Left colon (tissue), 2 donors: ENCODE measurements at regions of chr3 and their contacts with region 1.

Region 1: DNA sequence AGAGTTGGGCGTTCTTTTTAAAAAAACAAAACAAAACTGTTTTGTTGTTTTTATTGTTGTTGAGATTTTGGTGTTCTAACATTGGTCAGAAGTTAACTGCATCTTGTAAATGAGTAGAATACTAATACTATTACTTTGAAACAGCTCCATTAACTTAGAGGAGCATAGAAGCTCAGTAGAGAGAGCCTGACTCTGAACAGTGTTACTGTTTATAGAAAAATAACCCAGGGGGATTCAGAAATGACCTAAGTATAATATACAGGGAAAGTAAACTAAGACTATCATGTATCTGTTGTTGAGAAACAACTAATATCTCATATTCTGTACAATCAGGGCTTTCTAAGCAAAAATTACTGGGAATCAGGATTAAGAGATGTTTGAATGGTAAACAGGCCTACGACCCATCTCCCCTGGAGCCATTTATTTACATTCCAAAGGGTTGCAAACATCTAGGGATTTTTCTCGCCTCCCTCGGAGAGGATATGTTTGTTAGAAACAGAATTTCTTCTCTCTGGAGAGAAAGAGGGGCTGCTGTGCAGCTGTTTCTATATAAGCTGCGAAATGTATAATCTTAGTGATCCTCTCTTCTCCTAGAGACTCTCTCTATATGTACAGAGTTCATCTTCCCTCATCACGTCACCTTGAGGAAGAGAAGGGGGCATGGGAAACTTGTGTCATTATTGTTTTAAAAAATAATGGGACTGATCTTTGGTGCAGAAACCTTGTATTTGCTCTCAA is 827.5 kb upstream of the DPPA4 start:
- DNase-seq: no peak
- ATAC-seq: no peak

Region 2: DNA sequence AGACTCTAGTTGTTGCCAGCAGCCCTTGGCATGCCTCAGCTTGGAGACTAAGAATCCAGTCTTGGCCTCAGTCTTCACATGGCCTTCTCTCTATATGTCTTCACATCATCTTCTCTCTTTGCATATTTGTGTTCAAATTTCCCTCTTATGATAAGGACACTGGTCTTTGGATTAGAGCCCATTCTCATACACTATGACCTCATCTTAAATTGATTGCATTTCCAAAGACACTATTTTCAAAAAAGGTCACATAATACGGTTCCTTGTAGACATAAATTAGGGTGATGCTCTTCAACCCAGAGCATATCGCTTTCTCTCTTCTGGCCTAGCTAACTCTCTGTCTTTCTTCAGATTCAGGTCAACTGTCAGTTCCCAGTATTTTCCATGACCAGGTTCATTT is 54.2 kb before region 1 on chr3:
- intact Hi-C with region 1: loop called in 1 of 2 experiments (anchors 5 kb)
- DNase-seq: no peak
- ATAC-seq: no peak

Region 3: GRCh38 chr3:110307065-110307809 is 142.4 kb after region 1 on chr3:
- intact Hi-C with region 1: no loop called
- DNase-seq: no peak
- ATAC-seq: no peak